ENCODE measurements at regions of chr9 and their contacts with region 1.

Region 1: GRCh38 chr9:96327694-96328352 is 25.8 kb upstream of the HSD17B3 start:
- DNase-seq: no peak
- ATAC-seq: peak; percentile 62

Region 2: DNA sequence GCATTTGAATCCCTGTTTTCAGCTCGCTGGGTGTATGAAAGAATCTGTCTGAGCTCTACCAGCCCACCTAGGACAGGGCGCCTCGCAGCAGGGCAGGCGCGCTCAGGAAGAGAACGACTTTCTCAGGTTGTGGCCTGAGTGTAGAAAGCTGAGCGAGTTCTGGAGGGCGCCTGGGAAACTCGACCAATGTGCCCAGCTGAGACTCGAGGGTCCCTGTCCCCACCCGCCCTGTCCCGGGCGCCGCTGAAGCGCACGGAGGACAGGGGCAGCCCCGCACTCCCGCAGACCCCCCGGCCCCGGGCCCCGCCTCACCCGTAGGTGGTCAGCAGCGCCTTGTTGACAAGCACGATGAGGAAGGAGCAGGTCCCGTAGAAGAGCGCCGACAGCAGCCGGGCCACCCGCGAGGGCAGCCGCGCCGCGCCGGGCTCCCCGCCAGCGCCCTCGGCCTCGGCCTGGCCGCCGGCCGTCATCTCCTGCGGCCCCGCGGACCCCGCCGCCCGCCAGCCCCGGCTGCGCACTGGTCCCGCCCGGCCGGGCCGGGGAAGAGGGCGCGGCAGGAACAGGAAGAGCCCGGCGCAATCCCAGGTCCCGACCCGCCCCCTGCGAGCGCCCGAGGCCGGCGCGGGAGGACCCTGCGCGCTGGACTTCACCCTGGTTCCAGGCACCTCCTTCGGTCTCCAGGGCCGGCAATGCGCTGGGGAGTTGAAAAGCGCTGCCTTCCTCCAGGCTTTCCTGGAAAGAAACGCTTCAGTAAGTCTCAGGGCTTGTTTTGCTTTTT is 55.5 kb after region 1 on chr9 and contains the start of gene SLC35D2:
- intact Hi-C with region 1: loop called (anchors 2 kb)
- DNase-seq: peak; percentile 84
- ATAC-seq: peak; percentile 96
- total RNA-seq, gene SLC35D2: 14.7 TPM

Region 3: DNA sequence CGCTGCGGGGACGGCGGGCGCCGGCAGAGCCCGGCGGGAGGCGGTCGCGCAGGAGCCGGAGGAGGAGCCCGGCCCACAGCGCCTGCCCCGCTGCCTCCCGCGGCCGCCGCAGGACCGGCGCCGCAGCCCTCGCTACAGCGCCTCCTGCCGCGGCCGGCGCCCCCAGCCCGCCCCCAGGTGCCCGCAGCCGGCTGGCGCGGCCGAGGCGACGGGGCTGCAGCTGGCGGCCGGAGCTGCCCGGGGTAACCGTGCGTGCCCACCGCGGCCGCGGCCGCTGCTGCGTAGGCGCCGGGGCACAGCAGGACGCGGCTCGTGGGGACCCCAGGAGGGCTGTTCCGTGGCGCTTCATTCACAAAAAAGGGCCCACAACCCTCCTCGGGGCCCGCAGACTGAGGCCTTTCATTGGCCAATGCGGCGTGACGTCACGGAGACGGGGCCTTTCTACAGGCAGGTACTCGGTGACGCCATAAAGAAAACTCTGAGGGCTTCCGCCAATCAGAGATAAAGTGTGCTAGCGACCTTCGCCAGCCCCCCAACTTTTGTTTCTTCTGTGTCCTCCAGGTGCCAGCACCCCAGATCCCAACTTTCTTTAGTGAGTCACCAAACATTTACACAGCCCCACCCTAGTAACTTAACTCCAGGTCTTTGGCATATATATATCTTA is 291.8 kb after region 1 on chr9 and contains the start of gene CDC14B:
- intact Hi-C with region 1: no loop called
- DNase-seq: peak; percentile 95
- ATAC-seq: peak; percentile 82
- total RNA-seq, gene CDC14B: 14.5 TPM

Region 4: DNA sequence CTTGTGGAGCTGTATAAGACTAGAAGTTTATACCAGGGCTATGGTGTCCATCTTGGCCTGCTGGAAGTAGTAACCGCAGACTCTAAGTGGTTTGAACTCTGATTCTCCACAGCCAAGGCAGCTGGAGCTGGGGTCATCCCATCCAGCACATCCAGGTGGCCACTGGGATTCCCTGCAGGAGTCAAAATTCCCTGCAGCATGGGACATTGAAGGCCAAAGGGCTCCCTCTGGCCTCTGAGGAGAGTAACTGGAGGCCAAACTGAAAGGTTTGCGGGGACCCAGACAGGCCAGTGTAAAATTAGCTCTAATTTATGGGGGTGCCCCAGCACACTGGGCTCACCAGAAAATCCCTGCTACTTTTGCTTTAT is 339.5 kb after region 1 on chr9:
- intact Hi-C with region 1: loop called (anchors 2 kb)
- DNase-seq: no peak
- ATAC-seq: no peak

Measured in Right ventricle myocardium inferior (tissue), 1 donor.